Tibial artery (tissue), 4 donors: ENCODE measurements at regions of chr20 and their contacts with region 1.

Region 1: GRCh38 chr20:44187051-44187762 is at the start of gene JPH2:
- DNase-seq: peak; percentile 72 to 94
- H3K4me3 ChIP-seq: peak within 1 kb of the TSS; percentile 73 to 88
- H3K27ac ChIP-seq: peak within 1 kb of the TSS; percentile 93 to 95
- H3K4me1 ChIP-seq: peaks cover 0 to 52% (median 35%) of the 10 kb centered on the region in 4 donors
- H3K27me3 ChIP-seq: no peaks in the 10 kb centered on the region
- CTCF ChIP-seq: no peak

Region 2: GRCh38 chr20:44115762-44116644 is 71.2 kb before region 1 on chr20:
- intact Hi-C with region 1: loop called (anchors 2 kb)
- DNase-seq: no peak
- H3K4me3 ChIP-seq: no peak overlapping the region
- H3K27ac ChIP-seq: peak overlapping the region; percentile 7 to 59
- H3K4me1 ChIP-seq: peaks cover 0 to 85% (median 28%) of the 10 kb centered on the region in 4 donors
- H3K27me3 ChIP-seq: no peaks in the 10 kb centered on the region
- CTCF ChIP-seq: no peak

Region 3: DNA sequence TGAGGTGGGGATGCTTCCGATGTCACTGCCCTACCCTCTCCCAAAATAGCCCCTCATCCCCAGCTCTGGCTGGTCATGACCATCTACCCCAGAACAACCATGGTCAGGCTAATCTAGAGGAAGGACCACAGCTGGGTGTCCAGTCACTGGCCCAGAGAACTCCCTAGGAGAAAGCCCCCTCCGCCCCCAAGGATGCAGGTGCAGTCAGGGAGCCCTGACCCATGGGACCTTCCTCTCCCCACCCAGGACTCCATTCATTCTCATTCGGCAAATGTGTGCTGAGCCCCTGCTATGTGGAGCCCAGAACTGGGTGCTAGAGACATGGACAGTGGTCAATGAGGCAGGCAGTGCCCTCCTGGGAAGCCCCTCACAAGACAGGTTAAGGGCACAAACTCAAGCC is 60.8 kb before region 1 on chr20:
- intact Hi-C with region 1: no loop called
- DNase-seq: no peak
- H3K4me3 ChIP-seq: no peak overlapping the region
- H3K27ac ChIP-seq: peak overlapping the region; percentile 8 to 30
- H3K4me1 ChIP-seq: peaks cover 0 to 81% (median 31%) of the 10 kb centered on the region in 4 donors
- H3K27me3 ChIP-seq: no peaks in the 10 kb centered on the region
- CTCF ChIP-seq: no peak

Region 4: GRCh38 chr20:44247586-44248409 is 60.6 kb after region 1 on chr20:
- intact Hi-C with region 1: no loop called
- DNase-seq: no peak
- H3K4me3 ChIP-seq: peak overlapping the region; percentile 20 to 41
- H3K27ac ChIP-seq: no peak overlapping the region
- H3K4me1 ChIP-seq: peaks cover 0 to 13% (median 12%) of the 10 kb centered on the region in 4 donors
- H3K27me3 ChIP-seq: peaks cover 0 to 13% of the 10 kb centered on the region in 2 donors
- CTCF ChIP-seq: no peak

Region 5: GRCh38 chr20:44489931-44490330 is 302.7 kb after region 1 on chr20:
- intact Hi-C with region 1: no loop called
- DNase-seq: no peak
- H3K4me3 ChIP-seq: no peak overlapping the region
- H3K27ac ChIP-seq: no peak overlapping the region
- H3K4me1 ChIP-seq: peaks cover 0 to 28% (median 0%) of the 10 kb centered on the region in 4 donors
- H3K27me3 ChIP-seq: no peaks in the 10 kb centered on the region
- CTCF ChIP-seq: no peak

Region 6: GRCh38 chr20:45347936-45348778 is 1161.0 kb after region 1 on chr20 and contains the start of gene SDC4:
- intact Hi-C with region 1: loop called (anchors 10 kb)
- DNase-seq: peak; percentile 53 to 91
- H3K4me3 ChIP-seq: peak within 1 kb of the TSS; percentile 82 to 84
- H3K27ac ChIP-seq: peak within 1 kb of the TSS; percentile 86 to 98
- H3K4me1 ChIP-seq: peaks cover 0 to 55% (median 40%) of the 10 kb centered on the region in 4 donors
- H3K27me3 ChIP-seq: no peaks in the 10 kb centered on the region
- CTCF ChIP-seq: no peak